ENCODE measurements at regions of chr1 and their contacts with region 1.

Region 1: DNA sequence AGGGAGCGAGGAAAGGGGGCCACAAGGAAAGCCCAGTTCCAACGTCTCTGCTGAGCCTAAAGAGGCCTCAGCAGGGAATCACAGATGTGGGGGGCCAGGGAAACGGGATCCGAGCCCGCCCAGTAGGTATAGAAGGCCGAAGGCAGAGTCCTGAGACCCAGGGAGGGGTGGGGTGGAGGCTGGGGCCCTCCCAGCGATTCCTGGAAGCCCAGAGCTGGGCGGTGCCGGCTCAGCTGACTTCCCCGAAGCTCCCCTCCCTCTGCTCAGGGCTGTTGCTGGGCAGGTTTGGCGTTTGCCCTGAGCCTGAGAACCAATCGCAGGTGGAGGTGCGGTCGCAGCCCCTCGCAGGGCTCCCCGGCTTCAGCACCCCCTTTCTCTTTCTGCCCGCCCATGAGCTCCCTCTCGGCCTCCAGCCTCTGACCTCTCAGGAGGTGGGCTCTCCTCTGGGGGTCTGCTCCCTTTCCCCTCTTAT is 12.8 kb downstream of the ADAMTSL4 start:
- DNase-seq: peak; percentile 96
- H3K4me3 Mint-ChIP-seq: peak overlapping the region; percentile 89
- H3K27ac Mint-ChIP-seq: peak overlapping the region; percentile 99
- H3K4me1 Mint-ChIP-seq: peaks cover 54% of the 10 kb centered on the region
- H3K27me3 Mint-ChIP-seq: no peaks in the 10 kb centered on the region

Region 2: GRCh38 chr1:149886396-149887195 is 675.4 kb before region 1 on chr1:
- CTCF ChIA-PET with region 1: no interaction called
- POLR2A ChIA-PET with region 1: no interaction called
- intact Hi-C with region 1: loop called (anchors 10 kb)
- DNase-seq: peak; percentile 91
- H3K4me3 Mint-ChIP-seq: no peak overlapping the region
- H3K27ac Mint-ChIP-seq: no peak overlapping the region
- H3K4me1 Mint-ChIP-seq: peaks cover 10% of the 10 kb centered on the region
- H3K27me3 Mint-ChIP-seq: no peaks in the 10 kb centered on the region

Region 3: DNA sequence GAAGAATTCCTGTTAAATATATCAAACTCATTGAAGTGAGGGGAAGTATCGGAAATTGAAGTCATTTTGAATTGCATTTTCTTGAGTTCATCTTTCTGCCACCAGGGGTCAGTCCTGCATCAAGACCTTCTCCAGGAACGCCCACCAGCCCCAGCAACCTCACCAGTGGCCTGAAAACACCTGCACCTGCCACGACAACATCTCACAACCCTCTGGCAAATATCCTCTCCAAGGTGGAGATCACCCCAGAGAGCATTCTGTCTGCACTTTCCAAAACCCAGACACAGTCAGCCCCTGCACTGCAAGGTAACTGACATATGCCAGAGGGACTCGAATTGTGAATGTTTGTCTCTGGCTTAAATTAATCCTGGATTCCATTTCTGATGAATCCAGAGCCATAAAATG is 97.6 kb before region 1 on chr1:
- CTCF ChIA-PET with region 1: interaction called, 12 read pairs
- POLR2A ChIA-PET with region 1: no interaction called
- intact Hi-C with region 1: no loop called
- DNase-seq: peak; percentile 76
- H3K4me3 Mint-ChIP-seq: no peak overlapping the region
- H3K27ac Mint-ChIP-seq: peak overlapping the region; percentile 11
- H3K4me1 Mint-ChIP-seq: peaks cover 4% of the 10 kb centered on the region
- H3K27me3 Mint-ChIP-seq: no peaks in the 10 kb centered on the region

Region 4: DNA sequence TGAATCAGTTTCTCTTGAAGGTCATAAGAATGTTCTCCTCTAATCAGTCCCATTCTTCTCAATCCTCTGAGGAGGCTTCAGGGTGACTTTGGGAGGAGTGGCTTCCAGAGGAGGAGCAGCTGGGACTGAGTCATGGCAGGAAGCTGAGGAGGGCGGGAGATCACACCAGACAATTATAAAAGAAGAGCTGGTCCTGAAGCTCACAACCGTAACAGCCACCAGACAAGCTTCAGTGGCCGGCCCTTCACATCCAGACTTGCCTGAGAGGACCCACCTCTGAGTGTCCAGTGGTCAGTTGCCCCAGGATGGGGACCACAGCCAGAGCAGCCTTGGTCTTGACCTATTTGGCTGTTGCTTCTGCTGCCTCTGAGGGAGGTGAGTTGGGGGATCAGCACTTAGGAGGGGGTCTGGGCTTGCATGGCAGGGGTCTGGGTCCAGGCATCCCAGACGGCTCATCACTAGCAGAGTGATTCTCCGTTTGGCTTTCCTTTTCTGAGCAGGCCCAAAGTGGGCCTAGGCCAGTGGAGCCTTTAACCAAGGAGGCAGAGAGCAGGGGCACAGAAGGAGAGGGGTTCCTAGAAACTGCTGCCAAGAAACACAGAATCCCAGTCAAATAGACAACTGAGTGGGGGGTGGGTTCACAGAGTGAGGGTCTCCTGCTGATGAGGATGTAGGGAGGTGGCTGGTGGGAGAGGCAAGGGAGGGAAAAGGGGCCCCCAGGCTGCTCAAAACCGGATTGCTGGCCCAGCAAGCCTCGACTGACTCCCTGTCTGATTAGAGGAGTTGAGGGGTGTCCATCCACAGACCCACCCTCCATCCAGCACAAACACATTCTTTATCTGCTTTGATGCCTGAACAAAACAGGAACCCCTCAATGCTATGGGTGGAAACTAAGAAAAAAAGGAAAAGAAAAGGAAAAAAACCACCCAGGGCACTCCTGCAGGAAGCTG is 53.8 kb before region 1 on chr1 and contains the start of gene ECM1:
- CTCF ChIA-PET with region 1: no interaction called
- POLR2A ChIA-PET with region 1: no interaction called
- intact Hi-C with region 1: no loop called
- DNase-seq: no peak
- H3K4me3 Mint-ChIP-seq: no peak within 1 kb of the TSS
- H3K27ac Mint-ChIP-seq: no peak within 1 kb of the TSS
- H3K4me1 Mint-ChIP-seq: peaks cover 3% of the 10 kb centered on the region
- H3K27me3 Mint-ChIP-seq: no peaks in the 10 kb centered on the region
- total RNA-seq, gene ECM1: 1.1 to 1.5 TPM

Region 5: DNA sequence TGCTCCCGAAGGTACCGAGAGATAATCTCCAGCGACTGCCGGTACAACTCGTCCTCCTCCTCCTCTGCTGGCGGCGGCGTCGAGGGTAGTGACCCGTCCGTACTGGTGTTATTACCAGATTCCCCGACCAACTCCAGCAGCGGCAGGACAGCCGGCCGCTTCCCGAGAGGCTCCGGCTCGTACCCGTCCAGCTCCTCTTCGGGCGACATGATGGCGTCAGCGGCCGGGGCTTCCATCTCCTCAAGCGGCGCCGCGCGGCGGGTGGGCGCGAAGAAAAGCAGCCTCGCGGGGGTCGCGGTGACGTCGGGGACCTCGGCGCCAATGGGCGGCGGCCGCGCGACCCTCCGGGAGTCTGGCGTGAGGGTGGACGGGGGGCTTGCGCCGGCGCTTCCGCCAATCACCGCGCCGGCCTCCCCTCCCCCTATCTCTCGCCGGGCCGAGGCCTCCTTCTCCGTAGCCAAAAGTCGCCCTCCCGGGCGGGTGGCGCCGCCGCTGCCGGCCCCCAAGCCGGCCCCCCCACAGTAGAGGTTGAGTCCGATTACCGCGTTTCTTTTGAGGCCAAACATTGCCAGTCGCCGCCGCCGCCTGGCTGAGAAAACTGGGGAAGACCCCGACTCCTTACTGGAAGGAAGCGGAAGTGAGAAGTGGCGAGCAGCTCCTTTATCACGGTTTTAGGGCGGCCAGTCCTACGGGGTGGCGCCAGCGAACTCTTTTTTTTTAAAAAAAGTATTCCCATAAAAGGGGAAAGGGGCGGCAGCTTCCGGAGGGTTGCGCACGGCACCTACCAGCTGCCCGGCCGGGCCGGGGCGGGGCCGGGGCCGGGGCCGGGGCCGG is 17.2 kb after region 1 on chr1 and contains the start of gene MCL1:
- CTCF ChIA-PET with region 1: interaction called, 276 read pairs
- POLR2A ChIA-PET with region 1: interaction called, 527 read pairs
- intact Hi-C with region 1: loop called (anchors 1 kb)
- DNase-seq: peak; percentile 95
- H3K4me3 Mint-ChIP-seq: peak within 1 kb of the TSS; percentile 93
- H3K27ac Mint-ChIP-seq: peak within 1 kb of the TSS; percentile 98
- H3K4me1 Mint-ChIP-seq: peaks cover 27% of the 10 kb centered on the region
- H3K27me3 Mint-ChIP-seq: peaks cover 2% of the 10 kb centered on the region
- total RNA-seq, gene MCL1: 280 to 288 TPM

Region 6: DNA sequence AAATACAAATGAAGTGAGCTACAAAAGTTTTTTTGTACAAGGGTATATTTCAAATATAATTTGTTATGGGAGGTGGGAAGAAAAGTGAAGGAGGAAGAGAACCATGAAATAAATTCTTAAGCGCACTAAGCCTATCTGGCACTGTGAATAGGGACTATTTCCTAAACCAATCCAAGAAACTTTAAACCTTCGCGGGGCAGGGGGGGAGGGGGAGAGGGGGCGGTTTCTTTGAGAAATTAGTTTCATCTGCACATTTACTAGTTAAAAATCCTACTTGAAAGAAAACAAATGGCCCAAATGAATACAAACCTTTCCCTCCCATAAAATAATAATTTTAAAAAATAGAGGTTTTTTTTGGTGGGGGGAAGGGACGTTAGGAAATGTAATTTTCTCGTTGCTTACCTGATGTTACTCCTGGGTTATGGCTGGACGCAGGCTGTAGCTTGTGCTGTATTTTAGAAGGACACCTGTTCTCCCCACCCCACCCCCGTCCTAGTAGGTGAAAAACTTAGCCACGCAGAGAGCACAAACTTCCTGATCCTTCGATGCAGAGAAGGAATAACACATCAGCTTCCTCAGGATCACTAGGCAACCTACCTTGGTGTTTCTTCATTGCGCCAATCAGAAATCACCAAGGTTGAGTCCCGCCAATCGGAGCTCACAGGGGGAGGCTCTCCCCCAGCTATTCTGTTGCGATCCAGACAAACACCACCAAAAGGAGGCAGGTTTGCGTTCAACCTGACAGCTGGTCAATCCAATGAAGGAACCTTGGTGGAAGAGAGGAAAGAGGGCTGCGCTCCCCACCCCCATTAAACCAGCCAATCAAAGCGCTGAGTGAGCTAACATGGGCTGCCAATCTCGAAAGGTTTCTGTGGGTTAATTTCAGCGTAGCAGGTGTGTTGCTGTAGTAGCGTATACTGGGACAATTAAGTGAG is 134.8 kb after region 1 on chr1 and contains the start of gene GOLPH3L:
- CTCF ChIA-PET with region 1: interaction called, 24 read pairs
- POLR2A ChIA-PET with region 1: interaction called, 5 read pairs
- intact Hi-C with region 1: loop called (anchors 2 kb)
- DNase-seq: peak; percentile 96
- H3K4me3 Mint-ChIP-seq: peak within 1 kb of the TSS; percentile 96
- H3K27ac Mint-ChIP-seq: peak within 1 kb of the TSS; percentile 84
- H3K4me1 Mint-ChIP-seq: peaks cover 28% of the 10 kb centered on the region
- H3K27me3 Mint-ChIP-seq: no peaks in the 10 kb centered on the region
- total RNA-seq, gene GOLPH3L: 26.1 to 29.1 TPM

Region 7: DNA sequence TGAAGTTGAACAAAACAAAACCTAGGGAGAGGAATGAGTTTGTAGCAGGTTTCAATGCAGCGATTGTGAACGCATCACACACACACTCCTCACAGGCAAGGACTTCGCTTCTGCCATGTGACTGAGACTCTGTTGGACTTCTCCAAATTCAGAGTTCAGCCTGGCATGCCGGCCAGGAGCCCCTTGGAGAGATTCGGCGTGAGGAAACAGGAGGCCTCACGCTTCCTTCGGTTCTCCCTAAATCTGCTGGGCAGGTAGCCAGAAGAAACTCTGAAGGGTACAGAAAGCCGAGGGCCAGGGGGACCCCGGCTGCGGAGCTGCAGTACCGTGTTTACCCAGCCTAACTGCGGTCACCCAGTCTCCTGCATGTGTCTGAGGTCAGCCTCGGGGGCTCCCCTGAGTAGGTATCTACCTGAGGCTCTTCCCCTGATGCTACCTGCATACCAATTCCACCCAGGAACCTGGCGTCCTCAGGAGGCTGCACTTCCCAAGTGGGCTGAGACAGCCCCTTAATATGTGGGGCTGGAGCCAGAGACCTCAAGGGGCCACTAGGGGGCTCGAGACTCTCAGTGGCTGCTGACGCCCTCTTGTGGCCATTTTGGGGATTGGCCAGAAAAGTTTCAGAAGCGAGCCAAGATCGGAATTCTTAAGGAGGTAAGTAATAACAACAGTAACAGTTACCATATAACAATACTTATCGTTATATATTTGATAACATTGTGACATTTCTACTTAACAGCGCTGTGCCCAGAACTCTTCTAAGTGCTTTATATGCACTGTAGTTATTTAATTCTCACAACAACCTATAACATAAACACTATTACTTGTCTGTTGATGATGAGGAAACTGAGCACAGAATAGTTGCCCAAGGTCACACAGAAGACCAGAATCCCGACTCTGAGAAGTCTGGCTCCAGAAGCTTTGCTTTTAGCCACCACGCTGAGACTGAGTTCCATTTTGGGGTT is 417.4 kb after region 1 on chr1:
- CTCF ChIA-PET with region 1: interaction called, 3 read pairs
- POLR2A ChIA-PET with region 1: interaction called, 3 read pairs
- intact Hi-C with region 1: loop called (anchors 5 kb)
- DNase-seq: peak; percentile 92
- H3K4me3 Mint-ChIP-seq: peak overlapping the region; percentile 7
- H3K27ac Mint-ChIP-seq: no peak overlapping the region
- H3K4me1 Mint-ChIP-seq: peaks cover 33% of the 10 kb centered on the region
- H3K27me3 Mint-ChIP-seq: no peaks in the 10 kb centered on the region

Measured in activated CD4-positive, alpha-beta memory T cell treated with anti-CD3 and anti-CD28 coated beads for 36 hours (primary cell).